Ovary (tissue), 10 donors: ENCODE measurements at regions of chr2 and their contacts with region 1.

Region 1: GRCh38 chr2:237943395-237944094 is 23.3 kb upstream of the UBE2F start:
- DNase-seq: no peak
- H3K4me3 ChIP-seq: no peak overlapping the region
- H3K27ac ChIP-seq: no peak overlapping the region
- H3K4me1 ChIP-seq: peaks cover 3% of the 10 kb centered on the region
- H3K27me3 ChIP-seq: no peaks in the 10 kb centered on the region
- CTCF ChIP-seq: no peak
- EP300 ChIP-seq: no peak
- POLR2A ChIP-seq: no peak

Region 2: DNA sequence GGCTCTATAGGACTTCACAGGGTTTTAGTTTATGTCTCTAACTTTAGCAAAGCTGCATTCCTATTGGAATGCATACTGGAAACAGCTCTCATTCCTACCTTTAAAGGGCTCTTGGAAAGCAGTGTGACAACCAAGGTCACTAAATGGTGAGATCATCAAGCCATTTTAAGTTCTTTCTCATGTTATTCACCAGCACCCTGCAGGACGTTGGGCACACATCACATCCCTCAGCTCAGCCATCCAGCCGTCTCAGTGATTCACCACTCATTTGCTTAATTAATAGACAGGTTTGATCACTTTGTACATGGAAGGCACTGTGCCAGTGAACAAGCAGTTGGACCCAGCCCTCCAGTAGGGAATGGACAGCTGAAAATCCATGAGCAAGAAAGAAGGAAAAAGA is 177.2 kb before region 1 on chr2:
- intact Hi-C with region 1: loop called in 1 of 4 experiments (anchors 10 kb)
- DNase-seq: no peak
- H3K4me3 ChIP-seq: no peak overlapping the region
- H3K27ac ChIP-seq: no peak overlapping the region
- H3K4me1 ChIP-seq: peaks cover 5% of the 10 kb centered on the region
- H3K27me3 ChIP-seq: no peaks in the 10 kb centered on the region
- CTCF ChIP-seq: no peak
- EP300 ChIP-seq: no peak
- POLR2A ChIP-seq: no peak

Region 3: GRCh38 chr2:237900891-237901831 is 42.4 kb before region 1 on chr2:
- intact Hi-C with region 1: no loop called
- DNase-seq: peak in 2 of 5 donors; percentile 8 to 44
- H3K4me3 ChIP-seq: no peak overlapping the region
- H3K27ac ChIP-seq: no peak overlapping the region
- H3K4me1 ChIP-seq: peaks cover 4% of the 10 kb centered on the region
- H3K27me3 ChIP-seq: no peaks in the 10 kb centered on the region
- CTCF ChIP-seq: no peak
- EP300 ChIP-seq: no peak
- POLR2A ChIP-seq: no peak

Region 4: DNA sequence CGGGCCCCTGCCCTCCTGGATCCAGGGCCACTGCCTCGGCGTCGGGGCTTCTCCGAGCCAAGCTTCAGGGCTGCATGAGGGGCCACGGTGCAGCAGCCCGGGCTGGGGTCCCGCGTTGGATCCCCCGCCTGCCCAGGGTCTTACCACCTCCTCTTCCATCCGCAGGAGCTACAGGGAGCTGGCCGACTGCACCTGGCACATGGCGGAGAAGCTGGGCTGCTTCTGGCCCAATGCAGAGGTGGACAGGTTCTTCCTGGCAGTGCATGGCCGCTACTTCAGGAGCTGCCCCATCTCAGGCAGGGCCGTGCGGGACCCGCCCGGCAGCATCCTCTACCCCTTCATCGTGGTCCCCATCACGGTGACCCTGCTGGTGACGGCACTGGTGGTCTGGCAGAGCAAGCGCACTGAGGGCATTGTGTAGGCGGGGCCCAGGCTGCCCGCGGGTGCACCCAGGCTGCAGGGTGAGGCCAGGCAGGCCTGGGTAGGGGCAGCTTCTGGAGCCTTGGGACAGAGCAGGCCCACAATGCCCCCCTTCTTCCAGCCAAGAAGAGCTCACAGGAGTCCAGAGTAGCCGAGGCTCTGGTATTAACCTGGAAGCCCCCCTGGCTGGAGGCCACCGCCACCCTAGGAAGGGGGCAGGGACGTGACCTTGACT is 32.1 kb before region 1 on chr2:
- intact Hi-C with region 1: no loop called
- DNase-seq: peak in 1 of 5 donors; percentile 30
- H3K4me3 ChIP-seq: no peak overlapping the region
- H3K27ac ChIP-seq: no peak overlapping the region
- H3K4me1 ChIP-seq: no peaks in the 10 kb centered on the region
- H3K27me3 ChIP-seq: no peaks in the 10 kb centered on the region
- CTCF ChIP-seq: no peak
- EP300 ChIP-seq: no peak
- POLR2A ChIP-seq: no peak